ENCODE measurements at regions of chr2 and their contacts with region 1.

Region 1: DNA sequence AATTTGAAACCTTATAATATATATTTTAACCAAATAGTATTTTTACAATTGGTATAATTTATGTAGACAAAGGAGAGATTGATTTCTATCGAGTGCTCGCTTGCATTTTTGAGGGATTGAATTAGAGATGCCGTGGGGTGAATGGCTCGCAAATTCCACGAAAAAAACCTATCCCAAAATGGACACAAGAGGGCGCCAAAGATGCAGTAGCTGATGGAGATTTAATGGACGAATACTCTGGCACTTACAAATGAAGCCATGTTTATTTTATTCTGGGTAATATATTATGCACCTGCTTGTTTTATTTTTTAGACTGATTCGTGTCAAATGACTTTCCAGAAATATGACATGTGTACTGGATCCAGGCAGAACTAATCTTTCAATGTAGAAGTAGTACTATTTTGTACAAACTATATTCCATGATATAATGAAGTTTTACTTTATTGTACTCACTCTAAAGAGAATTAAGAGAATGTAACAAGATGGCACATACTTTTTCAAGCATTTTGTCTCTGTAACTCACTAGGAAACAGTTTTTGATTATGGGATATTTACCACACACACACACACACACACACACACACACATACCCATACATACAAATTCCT is 505.4 kb downstream of the PLCL1 start:
- DNase-seq: peak; percentile 87
- H3K4me3 Mint-ChIP-seq: no peak overlapping the region
- H3K27ac Mint-ChIP-seq: no peak overlapping the region
- H3K4me1 Mint-ChIP-seq: no peaks in the 10 kb centered on the region
- H3K27me3 Mint-ChIP-seq: peaks cover 28% of the 10 kb centered on the region

Region 2: DNA sequence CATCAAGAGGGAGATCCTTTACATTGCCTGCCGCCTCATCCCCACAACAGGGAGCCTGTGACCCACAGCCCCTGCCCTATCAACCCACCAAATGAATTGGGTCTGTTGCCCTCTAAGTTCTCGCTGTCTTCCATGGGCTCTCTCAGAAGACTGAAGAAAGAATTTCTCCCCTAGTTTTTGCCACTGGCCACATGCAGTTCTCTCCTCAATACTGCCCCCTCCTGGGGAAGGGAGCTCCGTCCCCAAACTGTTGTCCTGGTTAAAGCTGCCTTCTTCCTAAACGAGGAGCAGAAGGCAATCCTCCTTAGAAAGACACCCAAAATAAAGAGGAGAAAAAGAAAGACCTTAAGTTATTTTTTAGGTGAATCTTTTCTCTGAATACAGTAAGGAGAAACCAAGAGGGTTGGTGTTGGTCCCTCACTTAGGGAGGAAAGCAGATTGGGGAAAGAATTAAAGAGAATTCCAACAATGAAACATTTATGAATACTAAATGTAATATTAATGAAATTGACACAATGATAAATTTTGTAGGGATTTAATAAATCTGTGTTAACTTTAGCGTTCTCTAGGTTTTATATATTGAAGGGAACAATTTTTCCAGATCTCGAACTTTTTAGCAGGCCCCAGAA is 1179.1 kb after region 1 on chr2:
- intact Hi-C with region 1: loop called (anchors 2 kb)
- DNase-seq: peak; percentile 81
- H3K4me3 Mint-ChIP-seq: no peak overlapping the region
- H3K27ac Mint-ChIP-seq: no peak overlapping the region
- H3K4me1 Mint-ChIP-seq: no peaks in the 10 kb centered on the region
- H3K27me3 Mint-ChIP-seq: peaks cover 3% of the 10 kb centered on the region

Region 3: GRCh38 chr2:199596549-199596948 is 1286.8 kb after region 1 on chr2:
- intact Hi-C with region 1: loop called (anchors 10 kb)
- DNase-seq: peak; percentile 62
- H3K4me3 Mint-ChIP-seq: no peak overlapping the region
- H3K27ac Mint-ChIP-seq: no peak overlapping the region
- H3K4me1 Mint-ChIP-seq: no peaks in the 10 kb centered on the region
- H3K27me3 Mint-ChIP-seq: peaks cover 15% of the 10 kb centered on the region

Region 4: GRCh38 chr2:199739413-199740110 is 1429.8 kb after region 1 on chr2:
- intact Hi-C with region 1: loop called (anchors 5 kb)
- DNase-seq: peak; percentile 86
- H3K4me3 Mint-ChIP-seq: no peak overlapping the region
- H3K27ac Mint-ChIP-seq: no peak overlapping the region
- H3K4me1 Mint-ChIP-seq: peaks cover 4% of the 10 kb centered on the region
- H3K27me3 Mint-ChIP-seq: peaks cover 23% of the 10 kb centered on the region

Measured in activated CD4-positive, alpha-beta T cell treated with anti-CD3 and anti-CD28 coated beads, Interleukin-2, amount 10 ng/mL, durations not matched to agents 24 days and 14 days (primary cell).